Calu3 (cell line): ENCODE measurements at regions of chr14 and their contacts with region 1.

Region 1: GRCh38 chr14:36519431-36520321 is at the start of gene NKX2-1:
- DNase-seq: peak; percentile 33
- H3K4me3 Mint-ChIP-seq: peak within 1 kb of the TSS; percentile 72
- H3K27ac Mint-ChIP-seq: no peak within 1 kb of the TSS
- H3K4me1 Mint-ChIP-seq: no peaks in the 10 kb centered on the region
- H3K27me3 Mint-ChIP-seq: peaks cover 41% of the 10 kb centered on the region
- CTCF ChIP-seq: no peak
- total RNA-seq, gene NKX2-1: not detected in 2 replicates

Region 2: GRCh38 chr14:36418937-36419336 is 100.7 kb before region 1 on chr14:
- CTCF ChIA-PET with region 1: no interaction called
- intact Hi-C with region 1: loop called (anchors 10 kb)
- DNase-seq: no peak
- H3K4me3 Mint-ChIP-seq: no peak overlapping the region
- H3K27ac Mint-ChIP-seq: no peak overlapping the region
- H3K4me1 Mint-ChIP-seq: no peaks in the 10 kb centered on the region
- H3K27me3 Mint-ChIP-seq: peaks cover 33% of the 10 kb centered on the region
- CTCF ChIP-seq: no peak